ENCODE measurements at regions of chr2 and their contacts with region 1.

Region 1: DNA sequence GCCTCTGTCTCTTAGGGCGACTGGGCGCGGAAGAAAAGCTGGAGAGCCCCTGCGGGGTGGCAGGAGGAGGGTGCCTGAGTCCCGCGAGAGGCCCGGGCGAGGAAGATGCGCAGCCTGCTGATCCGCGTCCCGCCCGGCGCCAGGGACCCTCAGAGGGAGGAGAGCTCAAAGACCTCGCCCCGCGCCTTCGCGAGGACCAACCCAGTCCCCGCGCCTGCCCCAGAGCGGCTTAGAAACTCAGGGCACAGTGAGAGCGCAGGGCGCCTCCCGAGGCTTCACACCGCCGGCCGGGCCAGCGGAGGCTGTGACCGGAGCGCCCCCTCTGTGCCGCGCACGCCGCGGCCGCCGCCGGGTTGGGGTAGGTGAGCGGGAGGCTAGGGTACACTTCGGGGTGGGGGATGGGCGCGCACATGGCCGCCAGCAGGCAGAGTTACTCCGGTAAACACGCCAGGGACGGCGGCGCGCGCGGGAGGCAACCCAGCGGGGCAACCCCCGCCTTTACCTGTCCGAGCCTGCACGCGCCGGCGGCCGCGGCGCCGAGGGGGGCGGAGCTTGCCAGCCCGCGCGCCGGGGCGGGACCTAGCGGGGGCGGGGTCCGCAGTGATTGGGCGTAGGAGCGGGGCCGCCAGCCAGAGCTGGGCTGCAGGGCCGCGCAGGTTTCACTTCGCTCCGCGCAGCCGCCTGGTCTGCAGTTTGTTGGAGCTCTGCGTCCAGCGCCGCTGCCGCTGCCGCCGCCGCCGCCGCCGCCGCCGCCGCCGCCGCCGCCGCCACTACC is at the start of gene BCL2L11:
- DNase-seq: peak; percentile 89
- H3K4me3 ChIP-seq: peak within 1 kb of the TSS; percentile 72 to 92 (median 78)
- H3K27ac ChIP-seq: peak within 1 kb of the TSS; percentile 81
- H3K4me1 ChIP-seq: peaks cover 30% of the 10 kb centered on the region
- H3K27me3 ChIP-seq: no peaks in the 10 kb centered on the region
- CTCF ChIP-seq: peak in 1 of 2 donors; percentile 26
- total RNA-seq, gene BCL2L11: 7.3 to 9.7 TPM

Region 2: GRCh38 chr2:110810404-110810803 is 310.0 kb before region 1 on chr2:
- CTCF ChIA-PET with region 1: no interaction called
- dilution Hi-C with region 1: no loop called
- in situ Hi-C with region 1: no loop called
- intact Hi-C with region 1: loop called (anchors 2 kb)
- DNase-seq: no peak
- H3K4me3 ChIP-seq: no peak overlapping the region
- H3K27ac ChIP-seq: no peak overlapping the region
- H3K4me1 ChIP-seq: no peaks in the 10 kb centered on the region
- H3K27me3 ChIP-seq: no peaks in the 10 kb centered on the region
- CTCF ChIP-seq: no peak

Region 3: GRCh38 chr2:111135910-111136297 is 15.5 kb after region 1 on chr2:
- CTCF ChIA-PET with region 1: no interaction called
- dilution Hi-C with region 1: no loop called
- in situ Hi-C with region 1: no loop called
- intact Hi-C with region 1: no loop called
- DNase-seq: no peak
- H3K4me3 ChIP-seq: no peak overlapping the region
- H3K27ac ChIP-seq: no peak overlapping the region
- H3K4me1 ChIP-seq: peaks cover 9% of the 10 kb centered on the region
- H3K27me3 ChIP-seq: no peaks in the 10 kb centered on the region
- CTCF ChIP-seq: peak; percentile 3 to 8

Region 4: DNA sequence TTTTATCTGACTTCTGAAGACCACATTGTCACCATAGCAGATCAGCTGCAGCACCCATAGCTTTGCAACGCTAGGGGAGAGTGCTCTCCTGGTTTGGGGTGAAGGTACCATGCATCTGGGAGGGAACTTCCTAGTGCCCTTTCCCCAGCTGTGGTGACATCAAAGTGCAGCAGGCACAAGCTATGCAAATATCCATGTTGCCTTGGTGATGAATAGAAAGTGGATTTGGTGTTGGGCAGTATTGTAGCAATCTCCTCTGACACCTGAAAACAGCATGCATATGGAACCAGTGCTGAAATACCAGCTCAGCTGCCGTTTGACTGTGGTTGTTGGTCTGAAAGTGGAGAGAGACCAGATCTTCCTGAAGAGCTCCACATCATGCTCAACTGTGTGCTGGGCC is 37.4 kb after region 1 on chr2:
- CTCF ChIA-PET with region 1: no interaction called
- dilution Hi-C with region 1: no loop called
- in situ Hi-C with region 1: no loop called
- intact Hi-C with region 1: loop called (anchors 5 kb)
- DNase-seq: no peak
- H3K4me3 ChIP-seq: no peak overlapping the region
- H3K27ac ChIP-seq: no peak overlapping the region
- H3K4me1 ChIP-seq: peaks cover 51% of the 10 kb centered on the region
- H3K27me3 ChIP-seq: no peaks in the 10 kb centered on the region
- CTCF ChIP-seq: no peak

Region 5: GRCh38 chr2:111194835-111195621 is 74.6 kb after region 1 on chr2:
- CTCF ChIA-PET with region 1: no interaction called
- dilution Hi-C with region 1: no loop called
- in situ Hi-C with region 1: no loop called
- intact Hi-C with region 1: no loop called
- DNase-seq: no peak
- H3K4me3 ChIP-seq: no peak overlapping the region
- H3K27ac ChIP-seq: no peak overlapping the region
- H3K4me1 ChIP-seq: no peaks in the 10 kb centered on the region
- H3K27me3 ChIP-seq: no peaks in the 10 kb centered on the region
- CTCF ChIP-seq: peak in 1 of 2 donors; percentile 8

Region 6: DNA sequence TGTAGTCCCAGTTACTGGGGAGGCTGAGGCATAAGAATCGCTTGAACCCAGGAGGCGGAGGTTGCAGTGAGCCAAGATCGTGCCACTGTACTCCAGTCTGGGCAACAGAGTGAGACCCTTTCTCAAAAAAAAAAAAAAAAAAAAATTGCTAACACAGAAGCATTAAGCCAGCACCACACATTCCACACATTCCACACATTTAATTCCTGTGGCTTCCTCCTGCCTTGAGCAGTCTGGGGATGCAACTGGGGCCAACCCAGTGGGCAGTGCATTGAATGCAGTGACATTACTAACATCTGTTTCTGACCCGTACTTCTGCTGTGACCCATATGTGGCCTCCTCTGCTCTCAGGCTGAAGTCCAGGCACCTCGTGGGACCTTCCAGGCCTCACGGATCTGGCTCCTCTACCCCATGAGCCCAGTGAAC is 107.3 kb after region 1 on chr2:
- CTCF ChIA-PET with region 1: no interaction called
- dilution Hi-C with region 1: no loop called
- in situ Hi-C with region 1: no loop called
- intact Hi-C with region 1: no loop called
- DNase-seq: no peak
- H3K4me3 ChIP-seq: no peak overlapping the region
- H3K27ac ChIP-seq: no peak overlapping the region
- H3K4me1 ChIP-seq: peaks cover 10% of the 10 kb centered on the region
- H3K27me3 ChIP-seq: no peaks in the 10 kb centered on the region
- CTCF ChIP-seq: no peak

Region 7: DNA sequence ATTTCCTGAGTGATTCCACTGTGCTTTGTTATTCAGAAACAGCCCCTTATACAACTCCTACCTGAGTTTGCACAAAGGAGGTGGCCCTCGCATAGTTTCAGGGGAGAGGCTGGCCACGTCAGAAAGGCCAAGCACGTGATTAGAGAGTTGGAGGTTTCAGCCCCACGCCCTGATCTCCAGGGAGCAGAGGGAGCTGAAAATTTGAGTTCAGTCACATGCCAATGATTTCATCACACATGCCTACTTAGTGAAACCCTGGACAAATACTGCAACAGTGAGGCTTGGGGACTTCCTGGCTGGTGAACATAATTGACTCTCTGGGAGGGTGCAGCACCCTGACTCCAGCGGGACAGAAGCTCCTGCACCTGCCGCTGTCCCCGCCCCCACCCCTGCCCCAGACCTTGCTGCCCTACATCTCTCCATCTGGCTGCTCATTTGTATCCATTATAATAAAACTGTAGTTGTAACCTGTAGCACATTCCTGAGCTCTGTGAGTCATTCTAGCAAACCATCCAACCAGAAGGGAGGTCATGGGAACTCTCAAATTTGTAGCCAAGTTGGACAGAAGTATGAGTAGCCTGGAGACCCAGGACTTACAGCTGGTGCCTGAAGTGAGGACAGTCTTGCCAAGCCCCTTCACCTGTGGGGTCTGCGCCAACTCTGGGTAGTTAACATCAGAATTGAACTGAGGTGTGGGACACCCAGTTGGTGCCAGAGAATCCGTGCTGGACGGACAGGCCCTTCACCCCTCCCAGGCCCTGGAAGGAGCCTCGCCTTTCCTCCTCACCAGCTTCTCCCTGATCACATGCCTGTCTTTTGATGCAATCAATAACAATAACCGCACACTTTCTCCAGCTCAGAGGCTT is 539.2 kb after region 1 on chr2:
- CTCF ChIA-PET with region 1: no interaction called
- dilution Hi-C with region 1: no loop called
- in situ Hi-C with region 1: no loop called
- intact Hi-C with region 1: loop called (anchors 1 kb)
- DNase-seq: peak; percentile 99
- H3K4me3 ChIP-seq: no peak overlapping the region
- H3K27ac ChIP-seq: peak overlapping the region; percentile 96
- H3K4me1 ChIP-seq: peaks cover 37% of the 10 kb centered on the region
- H3K27me3 ChIP-seq: no peaks in the 10 kb centered on the region
- CTCF ChIP-seq: no peak

Region 8: DNA sequence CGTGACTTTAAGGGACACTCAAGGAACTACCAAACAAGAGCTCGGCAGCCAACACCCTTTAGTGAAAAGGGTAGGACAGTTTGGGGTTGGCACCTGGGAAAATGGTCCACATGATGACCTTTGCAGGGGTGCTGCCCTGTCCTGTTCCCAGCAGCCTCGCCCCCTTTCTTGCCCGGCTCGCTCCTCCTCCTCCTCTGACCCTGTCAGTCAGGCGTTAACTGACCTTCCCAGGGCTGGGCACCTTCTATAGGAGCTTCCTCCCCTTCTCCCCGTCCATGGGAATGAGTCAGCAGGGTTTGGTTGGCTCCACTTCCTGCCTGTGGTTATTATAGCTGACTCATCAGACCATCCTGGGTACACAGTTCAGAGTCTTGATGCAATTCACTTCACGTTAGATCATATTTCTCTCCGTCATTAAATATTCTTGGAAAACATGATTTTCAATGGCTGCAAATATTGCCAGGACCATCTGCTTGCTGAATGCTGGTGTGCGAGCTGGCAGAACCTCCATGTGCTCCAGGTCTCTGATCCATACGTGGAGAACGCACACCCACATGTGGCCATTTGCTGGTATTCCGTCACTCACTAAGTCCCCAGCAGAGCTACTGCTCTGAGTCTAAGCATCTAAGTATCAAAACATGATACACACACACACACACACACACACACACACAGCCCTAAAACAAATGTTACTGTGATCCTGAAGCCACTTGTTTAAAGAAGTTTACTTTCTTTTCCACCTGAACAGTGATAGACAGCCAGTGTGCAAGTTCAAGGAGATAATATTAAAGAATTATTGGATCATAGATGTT is 578.5 kb after region 1 on chr2:
- CTCF ChIA-PET with region 1: no interaction called
- dilution Hi-C with region 1: no loop called
- in situ Hi-C with region 1: loop called (anchors 5 to 25 kb)
- intact Hi-C with region 1: loop called (anchors 1 kb)
- DNase-seq: peak; percentile 99
- H3K4me3 ChIP-seq: peak overlapping the region in 1 of 3 experiments; percentile 6
- H3K27ac ChIP-seq: peak overlapping the region; percentile 73
- H3K4me1 ChIP-seq: peaks cover 50% of the 10 kb centered on the region
- H3K27me3 ChIP-seq: no peaks in the 10 kb centered on the region
- CTCF ChIP-seq: peak; percentile 45 to 54

Measured in mammary epithelial cell (primary cell).